ENCODE measurements at regions of chr1 and their contacts with region 1.

Region 1: DNA sequence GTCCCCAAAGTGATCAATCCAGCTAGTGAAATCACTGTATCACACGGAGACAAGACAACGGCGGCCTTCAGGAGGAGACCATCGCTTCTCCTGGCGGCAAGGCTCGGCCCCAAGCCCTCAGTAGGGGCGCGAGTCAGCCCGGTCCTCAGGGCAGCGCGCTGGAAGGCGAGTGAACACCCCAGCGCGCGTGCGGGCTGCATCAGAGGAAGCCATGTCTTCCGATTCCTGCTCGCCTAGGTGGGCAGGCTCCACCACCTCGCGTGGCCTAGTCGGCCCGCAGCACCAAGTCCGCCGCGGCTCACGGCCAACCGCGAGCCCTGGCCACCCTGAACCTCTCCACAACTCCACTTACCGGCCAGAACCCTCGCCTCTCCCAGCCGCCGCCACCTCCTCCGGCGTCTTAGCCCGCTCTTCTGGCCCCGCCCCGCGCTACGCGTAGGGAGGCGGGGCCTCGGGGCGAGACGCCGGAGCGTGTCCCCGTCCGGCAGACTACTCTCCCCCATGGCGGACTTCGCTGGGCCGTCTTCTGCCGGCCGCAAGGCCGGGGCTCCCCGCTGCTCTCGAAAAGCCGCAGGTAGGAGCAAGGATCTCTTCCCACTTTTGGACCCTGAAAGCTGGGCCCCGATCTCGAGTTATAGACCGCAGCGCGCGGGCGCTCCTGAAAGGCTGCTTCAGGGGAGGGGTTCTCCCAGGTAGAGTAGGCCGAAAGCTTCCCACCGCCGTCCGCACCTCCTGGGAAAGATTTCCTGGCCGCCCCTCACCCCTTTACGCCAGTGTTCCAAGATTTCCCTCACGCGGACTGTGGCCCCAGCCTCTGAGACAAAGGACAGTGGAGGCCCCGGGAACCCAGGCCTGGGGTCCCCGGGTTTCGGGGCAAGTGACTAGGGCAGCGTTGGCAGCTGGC is at the starts of genes GLMN and RPAP2:
- DNase-seq: peak; percentile 41 to 88 (median 68)
- ATAC-seq: peak; percentile 96
- H3K4me3 ChIP-seq: peak within 1 kb of the TSS; percentile 76 to 90
- H3K4me3 Mint-ChIP-seq: peak within 1 kb of the TSS; percentile 94
- H3K27ac ChIP-seq: peak within 1 kb of the TSS; percentile 74 to 93
- H3K27ac Mint-ChIP-seq: peak within 1 kb of the TSS; percentile 98
- H3K4me1 ChIP-seq: peaks cover 13% of the 10 kb centered on the region
- H3K4me1 Mint-ChIP-seq: peaks cover 52% of the 10 kb centered on the region
- H3K27me3 ChIP-seq: no peaks in the 10 kb centered on the region
- H3K27me3 Mint-ChIP-seq: no peaks in the 10 kb centered on the region
- CTCF ChIP-seq: no peak
- total RNA-seq, gene GLMN: 9.2 to 9.5 TPM
- total RNA-seq, gene RPAP2: 29.4 to 33.9 TPM

Region 2: GRCh38 chr1:91021686-91022517 is 1276.9 kb before region 1 on chr1 and contains the start of gene ZNF644:
- CTCF ChIA-PET with region 1: no interaction called
- POLR2A ChIA-PET with region 1: no interaction called
- intact Hi-C with region 1: loop called (anchors 10 kb)
- DNase-seq: peak; percentile 76 to 97 (median 89)
- ATAC-seq: peak; percentile 84
- H3K4me3 ChIP-seq: peak within 1 kb of the TSS; percentile 75 to 98
- H3K4me3 Mint-ChIP-seq: peak within 1 kb of the TSS; percentile 97
- H3K27ac ChIP-seq: peak within 1 kb of the TSS; percentile 99 to 100
- H3K27ac Mint-ChIP-seq: peak within 1 kb of the TSS; percentile 99
- H3K4me1 ChIP-seq: peaks cover 49% of the 10 kb centered on the region
- H3K4me1 Mint-ChIP-seq: peaks cover 64% of the 10 kb centered on the region
- H3K27me3 ChIP-seq: no peaks in the 10 kb centered on the region
- H3K27me3 Mint-ChIP-seq: no peaks in the 10 kb centered on the region
- CTCF ChIP-seq: no peak
- total RNA-seq, gene ZNF644: 105 to 109 TPM

Region 3: GRCh38 chr1:91500756-91501522 is 797.9 kb before region 1 on chr1 and contains the start of gene CDC7:
- CTCF ChIA-PET with region 1: no interaction called
- POLR2A ChIA-PET with region 1: no interaction called
- intact Hi-C with region 1: loop called (anchors 5 to 10 kb)
- DNase-seq: peak; percentile 56 to 92 (median 85)
- ATAC-seq: peak; percentile 83
- H3K4me3 ChIP-seq: peak within 1 kb of the TSS; percentile 88 to 98
- H3K4me3 Mint-ChIP-seq: no peak within 1 kb of the TSS
- H3K27ac ChIP-seq: peak within 1 kb of the TSS; percentile 58 to 86
- H3K27ac Mint-ChIP-seq: no peak within 1 kb of the TSS
- H3K4me1 ChIP-seq: peaks cover 10% of the 10 kb centered on the region
- H3K4me1 Mint-ChIP-seq: peaks cover 21% of the 10 kb centered on the region
- H3K27me3 ChIP-seq: no peaks in the 10 kb centered on the region
- H3K27me3 Mint-ChIP-seq: no peaks in the 10 kb centered on the region
- CTCF ChIP-seq: no peak
- total RNA-seq, gene CDC7: 2.2 to 2.7 TPM

Region 4: DNA sequence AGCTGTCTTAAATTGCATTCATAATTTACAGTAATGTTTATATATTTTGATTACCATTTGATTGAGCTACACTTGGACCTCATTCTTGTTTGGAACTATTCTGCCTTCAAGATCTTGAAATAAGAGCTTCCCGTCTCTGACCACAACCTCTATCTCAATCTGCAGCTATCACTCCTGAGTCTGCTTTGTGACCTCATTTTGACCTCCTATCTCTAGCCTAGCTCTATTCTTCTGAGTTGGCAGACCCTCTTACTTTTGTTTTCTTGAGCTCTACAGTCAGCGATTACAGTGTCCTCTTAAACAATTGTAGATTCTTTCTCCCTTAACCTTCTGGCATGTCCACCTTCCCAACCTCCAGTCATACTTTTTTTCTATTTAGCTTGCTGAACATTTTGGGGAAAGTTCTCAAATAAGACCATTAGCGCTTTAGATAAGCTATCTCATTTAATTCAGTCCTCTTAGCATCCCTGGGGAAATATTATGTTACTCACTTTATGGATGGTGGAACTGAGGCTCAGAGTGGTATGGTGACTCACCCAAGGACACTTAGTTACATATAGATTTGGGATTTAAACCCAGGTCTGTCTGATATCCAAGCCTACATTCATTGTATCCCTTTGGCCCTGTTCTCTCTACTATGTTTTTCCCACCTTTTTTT is 19.1 kb after region 1 on chr1:
- CTCF ChIA-PET with region 1: interaction called, 3 read pairs
- POLR2A ChIA-PET with region 1: interaction called, 3 read pairs
- intact Hi-C with region 1: loop called in 1 of 2 experiments (anchors 2 kb)
- DNase-seq: peak in 3 of 9 experiments; percentile 14 to 75 (median 62)
- ATAC-seq: peak; percentile 37
- H3K4me3 ChIP-seq: no peak overlapping the region
- H3K4me3 Mint-ChIP-seq: peak overlapping the region; percentile 64
- H3K27ac ChIP-seq: peak overlapping the region; percentile 12 to 47
- H3K27ac Mint-ChIP-seq: peak overlapping the region; percentile 91
- H3K4me1 ChIP-seq: peaks cover 58% of the 10 kb centered on the region
- H3K4me1 Mint-ChIP-seq: peaks cover 59% of the 10 kb centered on the region
- H3K27me3 ChIP-seq: no peaks in the 10 kb centered on the region
- H3K27me3 Mint-ChIP-seq: no peaks in the 10 kb centered on the region
- CTCF ChIP-seq: no peak

Region 5: DNA sequence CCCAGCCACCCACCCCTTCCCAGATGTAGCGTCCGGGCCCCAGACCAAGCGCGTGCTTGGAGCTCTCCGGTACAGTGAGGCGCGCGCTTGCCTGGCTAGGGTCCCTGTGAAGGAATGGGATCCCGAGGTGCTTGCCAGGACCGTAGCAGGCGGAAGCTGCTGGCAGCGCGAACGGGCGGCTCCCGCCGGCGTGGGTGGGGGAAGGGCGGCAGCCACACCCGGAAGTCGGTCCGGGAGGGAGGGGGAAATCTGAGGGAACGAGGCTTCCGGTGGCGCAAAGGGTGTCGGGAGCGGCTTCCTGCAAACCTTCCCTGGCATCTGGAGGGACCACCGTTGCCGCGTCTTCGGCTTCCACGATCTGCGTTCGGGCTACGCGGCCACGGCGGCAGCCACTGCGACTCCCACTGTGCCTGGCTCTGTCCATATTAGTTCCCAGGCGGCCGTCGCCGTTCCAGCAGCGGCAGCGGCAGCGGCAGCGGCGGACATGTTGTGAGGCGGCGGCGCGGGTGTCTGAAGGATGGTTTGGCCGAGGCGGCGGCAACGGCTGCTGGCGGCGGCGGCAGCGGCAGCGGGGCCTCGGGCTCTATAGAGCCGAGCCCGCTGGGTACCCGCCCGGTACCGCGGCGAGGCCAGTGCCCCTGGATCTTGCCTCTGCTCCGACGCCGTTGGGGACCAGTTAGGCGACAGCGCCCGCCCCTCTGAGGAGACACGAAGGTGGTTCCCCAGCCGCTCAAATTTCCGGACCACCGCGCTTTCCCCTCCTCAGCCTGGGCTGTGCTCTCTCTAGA is 1047.0 kb after region 1 on chr1 and contains the start of gene DR1:
- CTCF ChIA-PET with region 1: no interaction called
- POLR2A ChIA-PET with region 1: no interaction called
- intact Hi-C with region 1: loop called in 1 of 2 experiments (anchors 5 kb)
- DNase-seq: peak; percentile 81 to 94 (median 90)
- ATAC-seq: peak; percentile 74
- H3K4me3 ChIP-seq: peak within 1 kb of the TSS; percentile 80 to 81
- H3K4me3 Mint-ChIP-seq: peak within 1 kb of the TSS; percentile 95
- H3K27ac ChIP-seq: peak within 1 kb of the TSS; percentile 72 to 91
- H3K27ac Mint-ChIP-seq: peak within 1 kb of the TSS; percentile 98
- H3K4me1 ChIP-seq: peaks cover 32% of the 10 kb centered on the region
- H3K4me1 Mint-ChIP-seq: peaks cover 51% of the 10 kb centered on the region
- H3K27me3 ChIP-seq: no peaks in the 10 kb centered on the region
- H3K27me3 Mint-ChIP-seq: no peaks in the 10 kb centered on the region
- CTCF ChIP-seq: no peak
- total RNA-seq, gene DR1: 49.1 to 49.9 TPM